ENCODE measurements at regions of chr5 and their contacts with region 1.

Region 1: DNA sequence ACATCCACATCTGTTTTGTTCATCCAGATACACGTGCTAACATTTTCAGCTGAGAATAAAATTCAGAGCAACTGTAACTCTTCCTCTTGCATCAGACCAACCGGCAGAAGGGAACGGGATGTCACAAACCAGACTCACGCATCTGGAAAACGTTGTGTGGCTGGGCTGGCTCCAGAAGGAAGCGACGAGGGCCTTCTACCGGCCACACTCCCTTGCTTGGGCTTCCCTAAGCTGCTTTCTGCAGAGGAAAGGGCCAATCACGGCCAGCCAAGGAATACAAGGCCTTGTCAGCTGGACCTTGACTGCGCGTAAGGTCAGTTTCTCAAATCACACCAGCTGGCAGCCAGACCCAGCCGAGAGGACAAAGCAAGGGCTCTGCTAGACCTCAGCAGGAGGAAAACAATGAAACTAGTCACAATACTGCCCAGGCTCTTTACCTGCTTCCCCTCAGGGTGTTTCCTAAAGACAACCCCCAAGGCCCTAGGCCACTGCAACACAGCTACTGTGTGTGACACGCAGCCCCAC is 106.1 kb downstream of the THBS4 start:
- DNase-seq: no peak
- ATAC-seq: no peak
- H3K4me3 Mint-ChIP-seq: no peak overlapping the region
- H3K27ac Mint-ChIP-seq: no peak overlapping the region
- H3K4me1 Mint-ChIP-seq: peaks cover 39% of the 10 kb centered on the region
- H3K27me3 Mint-ChIP-seq: no peaks in the 10 kb centered on the region
- CTCF ChIP-seq: no peak

Region 2: DNA sequence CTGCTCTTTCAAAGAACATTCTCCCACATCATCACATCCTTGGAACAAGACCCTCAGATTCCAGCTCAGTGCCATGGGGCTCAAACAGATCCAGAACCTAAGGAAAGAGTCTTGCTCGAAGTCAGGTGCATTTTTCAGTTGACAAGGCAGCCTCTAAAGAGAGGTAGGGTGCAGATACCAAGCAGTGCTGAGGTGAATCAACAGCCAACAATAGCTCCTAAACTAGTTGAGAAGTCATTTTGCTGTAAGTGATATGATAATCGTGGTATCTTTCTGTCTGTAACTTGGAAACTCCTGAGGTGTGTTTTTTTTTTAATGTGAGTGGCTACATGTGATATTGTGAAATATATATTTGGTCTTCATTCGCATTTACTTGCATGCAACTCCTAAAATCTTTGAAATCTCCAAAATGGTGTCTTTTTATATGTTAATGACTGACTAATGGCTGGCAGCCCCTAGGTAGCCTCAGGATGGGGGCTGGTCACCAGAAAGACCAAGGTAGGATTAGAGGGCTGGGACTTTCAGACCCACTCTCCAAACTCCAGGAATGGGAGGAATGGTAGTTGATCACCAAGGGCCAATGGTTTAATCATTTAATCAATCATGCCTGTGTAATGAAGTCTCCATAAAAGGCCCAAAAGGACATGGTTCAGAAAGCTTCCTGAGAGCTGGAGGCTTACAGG is 18.1 kb after region 1 on chr5:
- CTCF ChIA-PET with region 1: no interaction called
- POLR2A ChIA-PET with region 1: no interaction called
- intact Hi-C with region 1: no loop called
- DNase-seq: no peak
- ATAC-seq: no peak
- H3K4me3 Mint-ChIP-seq: no peak overlapping the region
- H3K27ac Mint-ChIP-seq: no peak overlapping the region
- H3K4me1 Mint-ChIP-seq: no peaks in the 10 kb centered on the region
- H3K27me3 Mint-ChIP-seq: no peaks in the 10 kb centered on the region
- CTCF ChIP-seq: no peak

Region 3: GRCh38 chr5:80191991-80192398 is 50.8 kb after region 1 on chr5:
- CTCF ChIA-PET with region 1: no interaction called
- POLR2A ChIA-PET with region 1: no interaction called
- intact Hi-C with region 1: loop called (anchors 10 kb)
- DNase-seq: no peak
- ATAC-seq: no peak
- H3K4me3 Mint-ChIP-seq: no peak overlapping the region
- H3K27ac Mint-ChIP-seq: no peak overlapping the region
- H3K4me1 Mint-ChIP-seq: peaks cover 55% of the 10 kb centered on the region
- H3K27me3 Mint-ChIP-seq: no peaks in the 10 kb centered on the region
- CTCF ChIP-seq: no peak